Transverse colon (tissue), 4 donors: ENCODE measurements at regions of chr2 and their contacts with region 1.

Region 1: DNA sequence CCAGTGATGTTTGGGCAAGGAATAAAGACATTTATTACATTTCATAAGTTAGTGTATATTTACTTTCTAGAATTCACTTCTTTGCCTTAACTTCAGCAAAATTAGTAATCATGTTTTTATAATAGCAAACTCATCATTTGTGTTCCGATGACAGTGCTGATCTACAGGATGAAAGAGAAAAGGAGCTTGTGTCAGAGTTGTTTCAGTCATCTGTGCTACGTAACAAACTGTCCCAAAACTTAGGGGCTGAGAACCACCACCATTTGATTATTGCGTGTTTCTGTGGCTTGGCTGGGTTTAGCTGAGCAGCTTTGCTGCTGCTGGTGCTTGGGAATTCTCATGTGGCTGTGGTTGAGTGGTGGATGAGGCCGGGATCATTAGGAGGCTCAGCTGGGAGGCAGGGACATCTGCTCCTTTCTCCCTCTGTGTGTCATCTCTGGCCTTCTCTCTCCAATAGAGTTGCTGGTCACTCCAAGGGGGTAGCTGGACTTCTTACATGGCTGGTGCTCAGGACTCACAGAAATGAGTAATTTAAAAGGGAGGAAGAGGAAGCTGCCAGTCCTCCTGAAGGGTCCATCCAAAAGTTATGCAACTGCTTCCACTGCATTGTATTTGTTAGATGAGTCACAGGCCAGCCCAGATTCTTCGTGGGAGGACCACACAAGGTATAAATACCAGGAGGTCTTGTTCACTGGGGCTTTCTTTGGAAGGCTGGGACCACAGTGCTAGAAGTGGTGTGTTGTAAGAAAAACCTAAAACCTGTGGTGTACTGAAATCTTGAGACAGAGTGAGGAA is 43.4 kb upstream of the HAAO start:
- DNase-seq: peak; percentile 38
- H3K4me3 ChIP-seq: no peak overlapping the region
- H3K27ac ChIP-seq: peak overlapping the region; percentile 42 to 54 (median 48)
- H3K4me1 ChIP-seq: peaks cover 0 to 6% (median 2%) of the 10 kb centered on the region in 4 donors
- H3K27me3 ChIP-seq: no peaks in the 10 kb centered on the region
- CTCF ChIP-seq: no peak
- EP300 ChIP-seq: no peak
- POLR2A ChIP-seq: no peak

Region 2: GRCh38 chr2:42585821-42586221 is 250.0 kb before region 1 on chr2:
- in situ Hi-C with region 1: no loop called
- intact Hi-C with region 1: no loop called
- DNase-seq: no peak
- H3K4me3 ChIP-seq: no peak overlapping the region
- H3K27ac ChIP-seq: no peak overlapping the region
- H3K4me1 ChIP-seq: no peaks in the 10 kb centered on the region
- H3K27me3 ChIP-seq: no peaks in the 10 kb centered on the region
- CTCF ChIP-seq: no peak
- EP300 ChIP-seq: no peak
- POLR2A ChIP-seq: no peak

Region 3: DNA sequence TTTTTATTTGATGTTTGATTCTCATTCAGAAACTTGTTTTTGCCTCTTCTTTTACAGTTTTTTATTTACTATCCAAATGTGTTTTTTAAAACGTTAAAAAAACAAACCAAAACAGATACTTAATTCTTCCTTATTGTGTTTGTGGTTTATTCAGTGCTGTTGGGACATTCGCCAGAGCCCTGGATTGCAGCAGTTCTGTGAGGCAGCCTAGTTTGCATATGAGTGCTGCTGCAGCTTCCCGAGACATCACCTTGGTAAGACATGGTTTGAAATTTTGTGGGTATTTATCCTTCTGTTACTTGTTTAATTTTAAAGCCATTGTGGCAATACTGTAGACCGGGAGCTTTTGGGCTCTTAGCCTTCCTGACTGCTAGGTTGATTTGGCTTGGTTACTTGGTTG is 176.2 kb before region 1 on chr2:
- in situ Hi-C with region 1: no loop called
- intact Hi-C with region 1: no loop called
- DNase-seq: no peak
- H3K4me3 ChIP-seq: no peak overlapping the region
- H3K27ac ChIP-seq: no peak overlapping the region
- H3K4me1 ChIP-seq: peaks cover 0 to 4% (median 0%) of the 10 kb centered on the region in 4 donors
- H3K27me3 ChIP-seq: no peaks in the 10 kb centered on the region
- CTCF ChIP-seq: no peak
- EP300 ChIP-seq: no peak
- POLR2A ChIP-seq: no peak

Region 4: GRCh38 chr2:42928692-42929545 is 93.1 kb after region 1 on chr2:
- in situ Hi-C with region 1: loop called in 2 of 4 experiments (anchors 25 kb)
- intact Hi-C with region 1: loop called (anchors 10 kb)
- DNase-seq: peak; percentile 79
- H3K4me3 ChIP-seq: no peak overlapping the region
- H3K27ac ChIP-seq: peak overlapping the region; percentile 87 to 92 (median 88)
- H3K4me1 ChIP-seq: peaks cover 68 to 87% (median 79%) of the 10 kb centered on the region in 4 donors
- H3K27me3 ChIP-seq: no peaks in the 10 kb centered on the region
- CTCF ChIP-seq: peak; percentile 33 to 74 (median 46)
- EP300 ChIP-seq: peak; percentile 20
- POLR2A ChIP-seq: no peak

Region 5: DNA sequence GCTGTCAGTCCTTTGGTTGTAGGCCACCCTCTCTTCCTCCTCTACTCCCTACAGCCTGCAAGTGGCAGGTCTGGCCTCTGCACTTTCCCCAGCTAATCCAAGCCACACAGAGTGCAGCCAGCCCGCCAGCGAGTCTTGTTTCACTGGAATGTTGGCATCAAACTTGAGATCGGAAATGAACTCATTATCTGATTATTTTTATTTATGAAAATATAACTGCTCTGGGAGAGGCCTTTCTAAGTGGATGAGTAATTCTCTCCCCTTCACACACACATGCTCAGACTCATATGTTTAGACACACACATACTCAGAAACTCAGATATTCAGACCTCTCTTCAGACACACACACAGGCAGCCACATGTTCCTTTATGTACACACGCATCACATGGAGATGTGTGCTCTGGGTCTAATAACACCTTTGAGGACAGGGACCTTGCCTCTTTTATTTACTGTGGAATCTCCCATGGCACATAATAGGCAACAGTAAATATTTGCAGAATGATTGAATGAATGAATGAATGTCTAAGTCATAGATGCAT is 239.3 kb after region 1 on chr2:
- in situ Hi-C with region 1: no loop called
- intact Hi-C with region 1: no loop called
- DNase-seq: peak; percentile 55
- H3K4me3 ChIP-seq: no peak overlapping the region
- H3K27ac ChIP-seq: peak overlapping the region; percentile 68 to 83 (median 75)
- H3K4me1 ChIP-seq: peaks cover 12 to 41% (median 22%) of the 10 kb centered on the region in 4 donors
- H3K27me3 ChIP-seq: no peaks in the 10 kb centered on the region
- CTCF ChIP-seq: no peak
- EP300 ChIP-seq: no peak
- POLR2A ChIP-seq: peak; percentile 8

Region 6: GRCh38 chr2:43131024-43131889 is 295.5 kb after region 1 on chr2:
- in situ Hi-C with region 1: no loop called
- intact Hi-C with region 1: no loop called
- DNase-seq: peak; percentile 93
- H3K4me3 ChIP-seq: no peak overlapping the region
- H3K27ac ChIP-seq: peak overlapping the region; percentile 83 to 89 (median 86)
- H3K4me1 ChIP-seq: peaks cover 39 to 81% (median 45%) of the 10 kb centered on the region in 4 donors
- H3K27me3 ChIP-seq: no peaks in the 10 kb centered on the region
- CTCF ChIP-seq: peak; percentile 34 to 89 (median 46)
- EP300 ChIP-seq: peak; percentile 97
- POLR2A ChIP-seq: peak; percentile 62